Right cardiac atrium (tissue), 5 donors: ENCODE measurements at regions of chr1 and their contacts with region 1.

Region 1: DNA sequence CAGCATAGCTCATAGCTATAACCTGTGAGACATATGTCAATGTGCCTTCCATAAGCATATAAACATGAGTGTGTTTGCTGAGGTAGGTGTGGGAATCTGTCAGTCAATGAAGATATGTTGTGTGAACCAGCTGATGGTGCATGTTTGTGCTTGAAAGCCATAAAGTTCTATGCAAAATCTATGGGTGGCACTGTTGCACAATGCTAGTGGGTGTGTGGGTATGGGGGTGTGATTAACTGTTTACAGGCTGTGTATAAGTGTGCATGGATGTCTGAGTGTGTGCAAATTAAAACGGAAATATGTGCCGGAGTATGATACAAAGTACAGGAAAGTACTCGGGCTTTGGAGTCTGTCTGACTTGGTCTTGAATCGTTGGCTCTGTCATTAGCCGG is 1.0 kb upstream of the ATP2B4 start:
- DNase-seq: no peak
- ATAC-seq: peak; percentile 51 to 60
- H3K4me3 ChIP-seq: no peak overlapping the region
- H3K27ac ChIP-seq: peak overlapping the region; percentile 37
- H3K4me1 ChIP-seq: peaks cover 9% of the 10 kb centered on the region
- H3K27me3 ChIP-seq: no peaks in the 10 kb centered on the region

Region 2: GRCh38 chr1:203504397-203505250 is 121.0 kb before region 1 on chr1:
- intact Hi-C with region 1: loop called in 3 of 4 experiments (anchors 5 to 10 kb)
- DNase-seq: peak; percentile 80 to 93 (median 85)
- ATAC-seq: peak; percentile 44 to 61
- H3K4me3 ChIP-seq: no peak overlapping the region
- H3K27ac ChIP-seq: no peak overlapping the region
- H3K4me1 ChIP-seq: peaks cover 15% of the 10 kb centered on the region
- H3K27me3 ChIP-seq: no peaks in the 10 kb centered on the region

Region 3: GRCh38 chr1:203673550-203674427 is 48.2 kb after region 1 on chr1:
- intact Hi-C with region 1: loop called in 1 of 4 experiments (anchors 5 kb)
- DNase-seq: peak in 2 of 3 donors; percentile 67 to 68
- ATAC-seq: peak; percentile 70 to 93
- H3K4me3 ChIP-seq: no peak overlapping the region
- H3K27ac ChIP-seq: peak overlapping the region; percentile 100
- H3K4me1 ChIP-seq: peaks cover 50% of the 10 kb centered on the region
- H3K27me3 ChIP-seq: no peaks in the 10 kb centered on the region

Region 4: GRCh38 chr1:203692565-203693470 is 67.2 kb after region 1 on chr1:
- intact Hi-C with region 1: loop called in 2 of 4 experiments (anchors 2 kb)
- DNase-seq: peak; percentile 91 to 94 (median 92)
- ATAC-seq: peak; percentile 90 to 96
- H3K4me3 ChIP-seq: no peak overlapping the region
- H3K27ac ChIP-seq: peak overlapping the region; percentile 46
- H3K4me1 ChIP-seq: peaks cover 30% of the 10 kb centered on the region
- H3K27me3 ChIP-seq: no peaks in the 10 kb centered on the region

Region 5: GRCh38 chr1:203702130-203702577 is 76.5 kb after region 1 on chr1:
- intact Hi-C with region 1: loop called in 3 of 4 experiments (anchors 2 to 5 kb)
- DNase-seq: peak; percentile 33 to 67 (median 56)
- ATAC-seq: peak; percentile 57 to 68
- H3K4me3 ChIP-seq: no peak overlapping the region
- H3K27ac ChIP-seq: no peak overlapping the region
- H3K4me1 ChIP-seq: peaks cover under 1% of the 10 kb centered on the region
- H3K27me3 ChIP-seq: no peaks in the 10 kb centered on the region

Region 6: GRCh38 chr1:203769505-203770343 is 144.1 kb after region 1 on chr1:
- intact Hi-C with region 1: loop called in 1 of 4 experiments (anchors 10 kb)
- DNase-seq: peak; percentile 74 to 82 (median 80)
- ATAC-seq: peak; percentile 85 to 89
- H3K4me3 ChIP-seq: no peak overlapping the region
- H3K27ac ChIP-seq: peak overlapping the region; percentile 48
- H3K4me1 ChIP-seq: peaks cover 4% of the 10 kb centered on the region
- H3K27me3 ChIP-seq: no peaks in the 10 kb centered on the region